ENCODE measurements at regions of chr1 and their contacts with region 1.

Region 1: DNA sequence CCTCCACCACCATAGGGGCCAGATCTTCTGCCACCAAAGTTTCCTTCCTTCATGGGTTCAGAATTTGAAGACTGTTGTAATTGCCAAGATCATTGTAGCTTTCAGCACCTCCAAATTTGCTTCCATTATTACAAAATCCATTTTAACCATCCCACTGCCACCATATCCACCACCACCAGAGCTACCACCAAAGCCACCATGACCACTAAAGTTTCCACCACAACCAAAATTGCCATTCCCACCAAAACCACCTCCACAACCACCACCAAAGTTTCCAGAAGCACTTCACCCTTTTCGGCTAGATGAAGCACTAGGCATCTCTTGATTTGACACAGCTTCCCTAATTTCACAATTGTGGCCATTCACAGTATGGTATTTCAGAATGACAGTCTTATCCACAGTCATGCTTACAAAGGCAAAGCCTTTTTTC is 45.2 kb downstream of the SLC30A7 start:
- DNase-seq: peak; percentile 8
- ATAC-seq: peak; percentile 60
- H3K4me3 ChIP-seq: no peak overlapping the region
- H3K27ac ChIP-seq: no peak overlapping the region
- H3K4me1 ChIP-seq: no peaks in the 10 kb centered on the region
- H3K27me3 ChIP-seq: no peaks in the 10 kb centered on the region
- CTCF ChIP-seq: no peak
- EP300 ChIP-seq: no peak; a peak in 1 of 4 replicates
- POLR2A ChIP-seq: no peak
- RAD21 ChIP-seq: no peak

Region 2: DNA sequence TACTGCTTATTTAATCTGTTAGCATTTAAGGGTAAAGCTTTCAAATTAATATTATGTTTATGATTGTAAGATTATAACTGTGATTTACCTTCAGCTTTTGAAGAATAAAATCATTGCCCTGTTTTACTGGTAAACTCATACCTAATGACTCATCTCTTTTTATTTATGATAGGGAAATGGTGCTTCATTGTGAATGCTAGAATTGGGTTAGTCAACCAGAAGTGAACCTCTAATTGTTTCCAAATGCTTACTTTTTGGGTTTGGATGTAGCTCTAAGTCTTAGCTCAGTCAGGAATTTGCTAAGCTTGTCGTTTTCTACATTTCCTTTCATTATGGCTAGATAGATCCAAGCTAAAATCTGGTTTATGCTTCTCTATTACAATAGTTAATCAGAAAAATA is 14.2 kb after region 1 on chr1:
- CTCF ChIA-PET with region 1: interaction called, 7 read pairs
- POLR2A ChIA-PET with region 1: no interaction called
- RAD21 ChIA-PET with region 1: interaction called, 3 read pairs
- SMC1A ChIA-PET with region 1: interaction called, 17 read pairs
- in situ Hi-C with region 1: no loop called
- intact Hi-C with region 1: no loop called
- DNase-seq: no peak
- ATAC-seq: no peak
- H3K4me3 ChIP-seq: no peak overlapping the region
- H3K27ac ChIP-seq: no peak overlapping the region
- H3K4me1 ChIP-seq: no peaks in the 10 kb centered on the region
- H3K27me3 ChIP-seq: no peaks in the 10 kb centered on the region
- CTCF ChIP-seq: no peak
- EP300 ChIP-seq: no peak
- POLR2A ChIP-seq: no peak
- RAD21 ChIP-seq: no peak

Region 3: GRCh38 chr1:101228424-101229134 is 287.5 kb after region 1 on chr1:
- CTCF ChIA-PET with region 1: no interaction called
- POLR2A ChIA-PET with region 1: interaction called, 10 read pairs
- RAD21 ChIA-PET with region 1: no interaction called
- SMC1A ChIA-PET with region 1: no interaction called
- in situ Hi-C with region 1: no loop called
- intact Hi-C with region 1: no loop called
- DNase-seq: no peak
- ATAC-seq: no peak
- H3K4me3 ChIP-seq: no peak overlapping the region
- H3K27ac ChIP-seq: no peak overlapping the region
- H3K4me1 ChIP-seq: no peaks in the 10 kb centered on the region
- H3K27me3 ChIP-seq: no peaks in the 10 kb centered on the region
- CTCF ChIP-seq: no peak
- EP300 ChIP-seq: no peak
- POLR2A ChIP-seq: no peak
- RAD21 ChIP-seq: no peak

Measured in GM12878 (cell line).